ENCODE measurements at regions of chr5 and their contacts with region 1.

Region 1: DNA sequence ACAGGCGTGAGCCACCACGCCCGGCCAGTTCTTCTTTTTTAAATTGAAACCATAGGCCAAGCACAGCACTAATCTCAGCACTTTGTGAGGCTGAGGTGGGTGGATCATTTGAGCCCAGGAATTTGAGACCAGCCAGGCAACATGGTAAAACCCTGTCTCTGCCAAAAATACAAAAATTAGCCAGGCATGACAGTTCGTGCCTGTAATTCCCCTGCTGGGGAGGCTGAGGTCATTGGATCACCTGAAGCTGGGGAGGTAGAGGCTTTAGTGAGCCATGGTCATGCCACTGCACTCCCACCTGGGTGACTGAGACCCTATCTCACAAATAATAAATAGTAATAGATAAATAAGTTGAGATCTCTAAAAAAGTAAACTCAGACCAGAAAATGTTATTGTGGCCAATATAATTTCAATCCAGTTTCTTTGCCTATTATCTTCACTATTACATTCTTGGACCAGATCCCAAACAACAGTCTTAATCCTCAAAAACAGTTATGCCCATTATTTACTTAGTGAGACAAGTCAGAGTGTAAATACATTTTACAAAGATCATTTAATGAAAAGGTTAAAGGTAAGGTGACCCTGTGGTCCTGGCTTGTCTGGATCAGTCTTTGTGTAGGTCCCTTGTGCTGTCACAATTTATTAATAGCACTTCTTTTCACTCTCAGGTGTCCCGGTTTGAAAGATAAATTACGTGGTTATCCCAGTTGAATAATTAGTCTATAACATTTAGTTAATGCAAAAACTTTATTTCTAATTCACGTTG is 53.6 kb downstream of the RAB24 start:
- DNase-seq: no peak
- ATAC-seq: no peak
- H3K4me3 ChIP-seq: no peak overlapping the region
- H3K27ac ChIP-seq: no peak overlapping the region
- H3K4me1 ChIP-seq: no peaks in the 10 kb centered on the region
- H3K27me3 ChIP-seq: no peaks in the 10 kb centered on the region
- CTCF ChIP-seq: no peak
- POLR2A ChIP-seq: no peak

Region 2: DNA sequence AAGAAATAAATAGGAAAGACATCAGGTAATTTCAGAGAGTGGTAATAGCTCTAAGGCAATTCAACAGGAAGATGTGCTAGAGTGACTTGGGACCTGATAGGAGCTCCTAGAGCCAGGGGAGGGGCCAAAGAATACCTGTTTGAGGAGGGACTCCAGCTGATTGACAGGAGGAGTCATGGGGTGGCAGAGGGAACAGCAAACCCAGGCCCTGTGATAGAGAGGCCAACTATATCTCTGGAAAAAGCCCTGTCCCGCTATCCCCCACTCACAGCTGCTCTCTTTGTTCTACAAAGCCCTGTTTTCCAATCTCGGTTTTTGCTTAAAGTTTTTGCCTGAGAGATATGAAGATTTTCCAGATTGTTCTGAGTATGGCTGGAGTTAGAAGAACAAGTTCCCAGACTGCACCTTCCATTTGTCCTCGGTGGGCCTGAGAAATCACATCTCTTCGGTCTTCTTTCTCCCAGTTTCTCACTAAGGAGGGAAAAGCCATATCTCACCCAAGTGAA is 125.4 kb before region 1 on chr5:
- intact Hi-C with region 1: loop called in 1 of 2 experiments (anchors 10 kb)
- DNase-seq: no peak
- ATAC-seq: no peak
- H3K4me3 ChIP-seq: no peak overlapping the region
- H3K27ac ChIP-seq: no peak overlapping the region
- H3K4me1 ChIP-seq: no peaks in the 10 kb centered on the region
- H3K27me3 ChIP-seq: no peaks in the 10 kb centered on the region
- CTCF ChIP-seq: no peak
- POLR2A ChIP-seq: no peak